ENCODE measurements at regions of chr18 and their contacts with region 1.

Region 1: GRCh38 chr18:3245853-3246634 is 1.6 kb upstream of the MYL12A start:
- DNase-seq: peak; percentile 90 to 94 (median 93)
- ATAC-seq: peak; percentile 70 to 76 (median 73)
- H3K4me3 ChIP-seq: peak overlapping the region; percentile 24 to 98 (median 90)
- H3K27ac ChIP-seq: peak overlapping the region; percentile 98 to 100 (median 100)
- H3K4me1 ChIP-seq: peaks cover 0 to 47% (median 33%) of the 10 kb centered on the region in 12 donors
- H3K27me3 ChIP-seq: no peaks in the 10 kb centered on the region
- CTCF ChIP-seq: peak; percentile 92 to 99 (median 96)
- POLR2A ChIP-seq: peak in 1 of 2 donors; percentile 22

Region 2: GRCh38 chr18:2932247-2933181 is 313.5 kb before region 1 on chr18:
- intact Hi-C with region 1: loop called (anchors 1 to 10 kb)
- DNase-seq: no peak
- ATAC-seq: peak in 3 of 4 donors; percentile 11 to 55 (median 52)
- H3K4me3 ChIP-seq: no peak overlapping the region
- H3K27ac ChIP-seq: no peak overlapping the region
- H3K4me1 ChIP-seq: no peaks in the 10 kb centered on the region
- H3K27me3 ChIP-seq: no peaks in the 10 kb centered on the region
- CTCF ChIP-seq: peak; percentile 65 to 88 (median 81)
- POLR2A ChIP-seq: no peak

Region 3: DNA sequence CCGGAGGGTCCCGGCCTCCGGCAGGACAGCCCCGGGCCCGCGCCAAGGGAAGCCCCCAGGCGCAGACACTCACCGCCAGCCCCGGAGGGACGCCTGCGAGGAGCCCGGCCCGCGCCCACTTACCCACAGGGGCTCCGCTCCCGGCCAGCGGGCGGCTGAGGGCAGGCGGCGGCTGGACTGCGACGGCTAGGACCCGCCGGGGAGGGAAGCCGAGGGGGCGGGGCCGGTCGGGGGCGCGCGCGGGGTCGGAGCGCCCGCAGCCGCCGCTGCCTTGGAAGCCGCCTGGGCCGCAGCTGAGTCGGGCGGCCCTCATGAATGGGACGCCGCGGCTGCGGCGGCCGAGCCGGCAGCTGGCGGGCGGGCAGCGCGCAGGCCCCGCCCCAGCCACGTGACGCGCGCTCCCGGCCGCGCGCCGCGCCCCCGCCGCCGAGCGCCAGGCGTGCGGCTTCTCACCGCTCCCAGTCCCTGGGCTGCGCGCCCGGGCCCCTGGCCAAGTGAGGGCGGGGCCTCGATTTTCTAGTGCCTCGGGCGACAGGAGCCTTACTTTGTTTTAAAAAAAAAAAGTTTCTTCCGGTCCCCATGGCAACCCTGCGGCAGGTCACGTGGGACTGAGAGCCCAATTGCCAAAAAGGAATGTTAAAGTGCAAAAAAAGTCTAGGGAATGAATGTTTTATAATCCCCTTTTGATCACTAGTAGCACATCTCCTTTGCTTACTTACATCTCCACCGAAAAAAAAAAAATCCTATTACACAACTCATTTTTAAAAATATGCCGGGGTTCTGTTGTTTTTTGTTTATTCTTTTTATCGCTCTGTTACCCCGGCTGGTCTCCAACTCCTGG is 232.9 kb before region 1 on chr18 and contains the start of gene LPIN2:
- intact Hi-C with region 1: loop called in 4 of 10 experiments (anchors 5 to 10 kb)
- DNase-seq: peak; percentile 98 to 99 (median 99)
- ATAC-seq: peak; percentile 86 to 93 (median 91)
- H3K4me3 ChIP-seq: peak within 1 kb of the TSS; percentile 69 to 100 (median 90)
- H3K27ac ChIP-seq: peak within 1 kb of the TSS; percentile 82 to 97 (median 94)
- H3K4me1 ChIP-seq: peaks cover 0 to 87% (median 28%) of the 10 kb centered on the region in 12 donors
- H3K27me3 ChIP-seq: no peaks in the 10 kb centered on the region
- CTCF ChIP-seq: no peak
- POLR2A ChIP-seq: peak in 1 of 2 donors; percentile 63
- total RNA-seq, gene LPIN2: 6.1 to 21.6 (median 10.9) TPM

Region 4: DNA sequence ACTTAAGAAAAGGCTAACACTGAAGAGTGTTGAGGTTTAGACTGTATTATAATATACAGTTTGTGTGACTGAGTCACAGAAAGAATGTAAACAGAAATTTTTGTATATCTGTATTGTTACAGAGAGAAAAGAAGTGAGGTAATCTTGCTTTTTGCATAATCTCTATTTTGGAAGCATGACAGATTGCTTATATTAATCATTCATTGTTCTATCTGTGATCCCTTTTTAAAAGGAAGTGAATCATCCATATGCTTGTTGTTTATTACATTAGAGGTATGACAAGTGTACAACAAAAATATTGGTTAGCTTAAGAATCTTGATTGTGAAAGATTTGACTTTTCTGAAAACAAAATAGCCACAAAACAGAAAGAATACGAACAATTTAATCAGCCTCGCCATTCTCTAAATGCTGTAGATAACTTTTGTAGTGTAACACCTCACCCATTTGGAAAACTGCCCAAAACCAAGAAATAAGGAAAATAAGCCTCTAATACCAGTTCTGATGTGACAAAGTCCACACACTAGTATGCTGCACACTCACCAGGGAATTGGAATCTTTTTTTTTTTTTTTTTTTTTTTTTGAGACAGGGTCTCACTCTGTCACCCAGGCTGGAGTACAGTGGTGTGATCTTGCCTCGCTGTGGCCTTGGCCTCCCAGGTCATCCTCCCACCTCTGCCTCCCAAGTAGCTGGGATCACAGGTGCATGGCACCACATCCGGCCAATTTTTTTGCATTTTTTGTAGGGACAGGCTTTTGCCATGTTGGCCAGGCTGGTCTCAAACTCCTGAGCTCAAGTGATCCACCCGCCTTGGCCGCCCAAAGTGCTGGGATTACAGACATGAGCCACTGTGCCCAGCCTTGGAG is 141.6 kb before region 1 on chr18:
- intact Hi-C with region 1: no loop called
- DNase-seq: no peak
- ATAC-seq: no peak
- H3K4me3 ChIP-seq: no peak overlapping the region
- H3K27ac ChIP-seq: peak overlapping the region in 3 of 12 donors; percentile 6 to 14 (median 11)
- H3K4me1 ChIP-seq: peaks cover 0 to 23% (median 11%) of the 10 kb centered on the region in 12 donors
- H3K27me3 ChIP-seq: no peaks in the 10 kb centered on the region
- CTCF ChIP-seq: no peak
- POLR2A ChIP-seq: no peak

Region 5: DNA sequence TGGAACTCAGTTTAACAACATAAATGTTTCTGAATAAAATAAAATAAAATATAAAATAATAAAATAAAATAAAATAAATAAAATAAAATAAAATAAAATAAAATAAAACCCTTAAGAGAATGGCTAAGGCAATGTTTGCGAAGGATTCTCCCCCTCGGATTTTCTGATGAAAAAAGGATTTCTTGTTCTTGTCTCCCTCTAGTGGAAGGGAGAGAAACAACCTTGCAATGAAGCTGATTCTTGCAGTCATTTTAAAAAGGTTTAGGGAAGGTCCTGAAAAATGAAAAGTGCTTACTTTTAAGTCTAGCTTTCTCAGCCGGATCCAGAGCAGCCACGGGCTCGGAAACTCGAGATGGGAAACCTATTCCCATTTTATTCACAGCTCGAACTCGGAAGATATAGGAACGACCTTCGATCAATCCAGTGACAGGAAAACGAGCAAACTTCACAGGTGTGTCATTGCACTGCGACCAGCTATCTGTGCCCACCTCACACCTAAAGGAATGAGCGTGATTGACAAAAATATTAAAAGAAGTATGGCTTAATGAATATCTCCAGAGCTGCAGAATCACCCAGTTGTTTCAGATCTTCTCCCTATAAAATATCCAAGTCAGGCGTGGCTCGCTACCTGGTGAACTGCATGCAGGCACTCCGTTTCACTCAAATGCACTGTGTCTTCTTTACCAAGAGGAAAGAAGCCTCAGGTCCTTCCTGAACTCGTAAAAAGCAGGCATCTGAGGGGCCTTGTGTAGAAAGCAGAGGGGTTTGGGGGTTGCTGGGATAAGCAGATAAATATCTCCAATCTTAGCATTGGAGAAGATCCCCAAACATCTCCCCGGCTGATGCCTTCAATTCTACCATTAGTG is 94.4 kb before region 1 on chr18:
- intact Hi-C with region 1: loop called in 8 of 10 experiments (anchors 1 to 10 kb)
- DNase-seq: no peak
- ATAC-seq: no peak
- H3K4me3 ChIP-seq: no peak overlapping the region
- H3K27ac ChIP-seq: peak overlapping the region in 1 of 12 donors; percentile 0
- H3K4me1 ChIP-seq: peaks cover 3 to 39% (median 20%) of the 10 kb centered on the region in 12 donors
- H3K27me3 ChIP-seq: no peaks in the 10 kb centered on the region
- CTCF ChIP-seq: peak; percentile 64 to 86 (median 72)
- POLR2A ChIP-seq: no peak

Region 6: DNA sequence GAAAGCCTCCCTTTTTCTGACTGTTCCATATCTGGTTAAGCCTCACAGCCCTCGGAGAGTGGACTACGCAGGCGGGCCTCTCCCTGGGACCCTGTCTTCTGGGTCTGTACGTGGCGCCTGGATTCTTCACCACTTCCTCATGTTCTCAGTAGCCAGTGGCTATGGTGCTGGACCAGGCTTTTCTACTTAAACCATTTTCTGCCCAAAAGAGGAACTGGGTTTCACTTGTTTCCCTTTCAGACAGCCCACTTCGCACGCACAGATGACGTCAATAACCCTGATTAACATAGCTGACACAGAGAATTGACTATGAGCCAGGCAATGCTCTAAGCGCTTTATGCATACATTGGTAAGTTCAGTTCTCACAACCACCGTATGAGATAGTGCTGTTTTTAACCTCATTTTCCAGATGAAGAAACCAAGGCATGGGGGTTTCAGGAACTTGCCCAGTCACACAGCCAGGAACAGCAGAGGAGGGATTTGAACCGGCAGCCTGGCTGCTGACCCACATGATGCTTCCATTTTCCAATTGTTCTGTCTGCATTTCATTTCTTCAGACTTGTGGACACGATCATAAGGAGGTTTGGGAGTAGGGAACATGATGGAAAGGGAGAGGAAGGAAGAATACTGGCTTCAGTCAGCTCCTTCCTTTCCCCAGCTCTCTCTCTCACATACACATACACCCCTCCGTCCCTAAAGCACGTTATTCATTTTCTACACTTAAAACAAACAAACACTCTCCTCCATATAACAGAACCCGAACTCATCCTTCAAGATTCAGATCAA is 67.9 kb before region 1 on chr18:
- intact Hi-C with region 1: loop called in 3 of 10 experiments (anchors 2 to 10 kb)
- DNase-seq: peak in 4 of 5 donors; percentile 52 to 68 (median 62)
- ATAC-seq: peak; percentile 39 to 71 (median 52)
- H3K4me3 ChIP-seq: no peak overlapping the region
- H3K27ac ChIP-seq: peak overlapping the region in 11 of 12 donors; percentile 10 to 87 (median 45)
- H3K4me1 ChIP-seq: peaks cover 0 to 37% (median 14%) of the 10 kb centered on the region in 12 donors
- H3K27me3 ChIP-seq: no peaks in the 10 kb centered on the region
- CTCF ChIP-seq: no peak
- POLR2A ChIP-seq: no peak

Region 7: GRCh38 chr18:3209859-3210569 is 36.0 kb before region 1 on chr18:
- intact Hi-C with region 1: loop called in 1 of 10 experiments (anchors 5 kb)
- DNase-seq: no peak
- ATAC-seq: peak in 1 of 4 donors; percentile 6
- H3K4me3 ChIP-seq: peak overlapping the region in 5 of 12 donors; percentile 0 to 64 (median 24)
- H3K27ac ChIP-seq: peak overlapping the region in 10 of 12 donors; percentile 24 to 97 (median 81)
- H3K4me1 ChIP-seq: peaks cover 0 to 59% (median 30%) of the 10 kb centered on the region in 12 donors
- H3K27me3 ChIP-seq: no peaks in the 10 kb centered on the region
- CTCF ChIP-seq: no peak
- POLR2A ChIP-seq: no peak

Region 8: GRCh38 chr18:3225588-3225987 is 20.5 kb before region 1 on chr18:
- intact Hi-C with region 1: loop called in 1 of 10 experiments (anchors 2 kb)
- DNase-seq: no peak
- ATAC-seq: no peak
- H3K4me3 ChIP-seq: no peak overlapping the region
- H3K27ac ChIP-seq: peak overlapping the region in 1 of 12 donors; percentile 30
- H3K4me1 ChIP-seq: peaks cover 0 to 9% (median 0%) of the 10 kb centered on the region in 12 donors
- H3K27me3 ChIP-seq: no peaks in the 10 kb centered on the region
- CTCF ChIP-seq: no peak
- POLR2A ChIP-seq: no peak